ENCODE measurements at regions of chr5 and their contacts with region 1.

Region 1: DNA sequence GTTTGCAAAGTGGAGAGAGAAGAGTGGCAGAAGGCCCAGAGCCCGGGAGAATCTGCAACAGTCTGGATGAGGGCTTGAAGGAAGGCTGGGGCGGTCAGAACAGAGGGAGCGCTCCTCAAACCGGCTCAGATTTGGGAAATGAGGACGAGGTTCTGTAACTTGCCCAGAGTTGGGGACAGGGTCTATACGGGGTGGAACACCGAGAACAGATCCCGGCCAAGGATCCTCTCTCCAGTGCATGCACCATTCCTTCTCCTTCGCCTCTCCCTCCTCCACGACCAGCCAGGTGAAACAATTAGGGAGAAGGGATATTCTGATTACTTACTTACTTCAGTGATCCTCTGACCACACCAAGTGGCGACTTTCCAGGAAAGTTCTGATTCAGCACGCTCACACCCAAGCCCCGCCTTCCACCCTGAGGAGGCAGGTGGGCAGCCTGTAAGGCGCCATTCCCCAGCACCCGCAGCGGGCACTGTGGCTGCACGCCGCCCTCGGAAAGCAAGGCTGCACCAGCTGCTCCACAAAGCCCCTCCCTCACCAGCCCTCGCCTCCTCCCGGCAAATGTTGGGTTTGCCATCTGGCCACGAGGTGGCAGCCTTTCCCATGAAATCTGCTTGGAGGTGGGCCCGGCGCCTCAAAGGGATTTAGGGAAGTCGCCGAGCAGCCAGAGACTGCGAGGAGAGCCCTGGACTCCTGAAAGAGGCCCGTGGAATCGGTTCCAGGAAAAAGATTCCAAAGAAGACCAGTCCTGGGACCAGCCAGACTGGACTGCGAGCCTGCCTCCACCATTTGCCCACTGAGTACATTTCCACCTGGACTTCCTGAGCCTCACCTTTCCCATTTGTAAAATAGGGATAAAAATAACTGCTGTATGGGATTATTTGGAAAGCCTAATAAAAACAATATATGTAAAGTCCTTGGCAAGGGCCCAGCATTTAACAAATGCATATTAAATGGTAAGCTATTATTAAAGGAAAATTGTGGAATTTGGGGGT is 22.2 kb upstream of the WWC1 start:
- DNase-seq: peak; percentile 97
- H3K4me3 Mint-ChIP-seq: peak overlapping the region; percentile 12
- H3K27ac Mint-ChIP-seq: peak overlapping the region; percentile 5
- H3K4me1 Mint-ChIP-seq: peaks cover 43% of the 10 kb centered on the region
- H3K27me3 Mint-ChIP-seq: no peaks in the 10 kb centered on the region
- CTCF ChIP-seq: peak; percentile 94

Region 2: DNA sequence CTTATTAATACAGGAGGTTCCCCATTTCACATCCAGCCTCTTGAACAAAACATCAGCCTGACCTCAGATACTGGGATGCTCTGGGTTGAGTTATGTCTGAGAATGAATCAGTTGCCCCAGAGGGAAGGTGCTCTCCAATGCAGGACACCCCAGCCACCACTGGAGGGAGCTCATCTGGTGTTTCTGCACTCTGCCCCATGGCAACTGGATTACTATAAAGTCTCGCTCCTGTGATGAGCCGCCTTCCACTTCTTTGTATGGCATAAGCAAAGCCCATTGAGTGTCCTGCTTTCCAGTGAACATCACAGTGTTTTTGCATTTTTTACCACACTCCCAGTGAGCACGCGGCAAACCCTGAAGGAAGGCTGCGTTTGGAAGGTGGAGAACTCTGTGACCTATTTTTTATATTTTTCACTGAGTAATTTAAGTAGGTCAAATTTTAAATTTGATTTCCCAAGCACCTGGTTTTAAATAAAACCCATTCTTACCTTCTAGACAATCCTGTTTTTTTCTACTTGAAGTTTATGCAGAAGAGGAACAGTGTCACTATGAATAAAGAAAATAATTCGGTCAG is 154.7 kb before region 1 on chr5:
- CTCF ChIA-PET with region 1: no interaction called
- intact Hi-C with region 1: no loop called
- DNase-seq: peak; percentile 90
- H3K4me3 Mint-ChIP-seq: no peak overlapping the region
- H3K27ac Mint-ChIP-seq: no peak overlapping the region
- H3K4me1 Mint-ChIP-seq: no peaks in the 10 kb centered on the region
- H3K27me3 Mint-ChIP-seq: peaks cover 59% of the 10 kb centered on the region
- CTCF ChIP-seq: peak; percentile 78

Region 3: GRCh38 chr5:168192120-168192519 is 77.1 kb before region 1 on chr5:
- CTCF ChIA-PET with region 1: no interaction called
- intact Hi-C with region 1: no loop called
- DNase-seq: no peak
- H3K4me3 Mint-ChIP-seq: no peak overlapping the region
- H3K27ac Mint-ChIP-seq: no peak overlapping the region
- H3K4me1 Mint-ChIP-seq: no peaks in the 10 kb centered on the region
- H3K27me3 Mint-ChIP-seq: peaks cover 85% of the 10 kb centered on the region
- CTCF ChIP-seq: no peak

Region 4: DNA sequence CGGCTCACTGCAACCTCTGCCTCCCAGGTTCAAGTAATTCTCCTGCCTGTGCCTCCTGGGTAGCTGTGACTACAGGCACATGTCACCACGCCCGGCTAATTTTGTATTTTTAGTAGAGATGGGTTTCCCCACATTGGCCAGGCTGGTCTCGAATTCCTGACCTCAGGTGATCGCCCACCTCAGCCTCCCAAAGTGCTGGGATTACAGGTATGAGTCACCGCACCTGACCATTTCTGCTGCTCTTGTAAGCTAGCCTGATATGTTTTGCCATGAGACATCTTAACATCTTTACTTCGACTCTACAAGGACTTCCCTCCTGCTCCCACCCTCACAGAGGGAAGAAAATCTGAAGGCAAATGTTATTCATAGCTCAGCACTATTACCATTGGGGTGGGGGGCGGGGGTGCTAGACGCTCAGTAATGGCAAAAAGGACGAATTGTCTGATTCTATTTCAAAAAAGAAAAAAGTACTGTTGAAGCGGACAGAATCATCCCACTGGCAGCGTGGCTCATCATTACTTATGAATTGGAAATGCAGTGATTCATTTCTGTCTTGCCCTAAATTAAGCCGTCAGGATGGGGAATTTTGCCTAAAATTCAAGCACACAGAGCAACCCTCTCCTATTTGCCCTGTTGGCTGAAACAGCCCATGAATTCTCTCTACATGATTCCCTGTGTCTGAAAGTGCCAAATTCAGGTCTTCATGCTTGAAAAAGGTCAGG is 24.2 kb before region 1 on chr5:
- CTCF ChIA-PET with region 1: no interaction called
- intact Hi-C with region 1: no loop called
- DNase-seq: no peak
- H3K4me3 Mint-ChIP-seq: no peak overlapping the region
- H3K27ac Mint-ChIP-seq: no peak overlapping the region
- H3K4me1 Mint-ChIP-seq: no peaks in the 10 kb centered on the region
- H3K27me3 Mint-ChIP-seq: peaks cover 23% of the 10 kb centered on the region
- CTCF ChIP-seq: no peak

Region 5: DNA sequence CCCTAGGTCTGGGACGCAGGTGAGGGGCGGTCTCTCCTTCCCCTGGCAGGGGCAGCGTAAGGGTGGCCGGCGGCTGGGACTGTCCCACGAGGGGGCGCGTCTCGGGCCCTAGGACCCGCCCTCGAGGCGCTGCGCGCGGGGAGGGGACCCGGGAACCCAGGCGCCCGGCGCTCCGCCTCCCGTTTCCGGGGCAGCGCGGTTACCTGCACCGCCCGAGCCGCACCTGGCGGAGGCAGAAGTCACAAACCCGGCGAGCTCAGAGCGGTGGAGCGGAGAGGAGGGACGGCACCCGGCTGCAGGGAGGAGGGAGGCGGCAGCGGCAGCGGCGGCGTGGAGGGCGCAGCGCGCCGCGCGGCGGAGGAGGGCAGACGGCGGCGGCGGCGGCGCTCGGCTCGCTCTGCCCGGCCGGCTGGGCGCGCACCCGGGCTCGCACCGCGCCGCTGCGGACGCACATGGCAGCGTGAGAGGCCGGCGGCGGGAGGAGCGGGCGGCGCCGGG is 22.3 kb after region 1 on chr5 and contains the start of gene WWC1:
- CTCF ChIA-PET with region 1: interaction called, 20 read pairs
- intact Hi-C with region 1: loop called (anchors 2 kb)
- DNase-seq: peak; percentile 99
- H3K4me3 Mint-ChIP-seq: peak within 1 kb of the TSS; percentile 97
- H3K27ac Mint-ChIP-seq: peak within 1 kb of the TSS; percentile 85
- H3K4me1 Mint-ChIP-seq: peaks cover 81% of the 10 kb centered on the region
- H3K27me3 Mint-ChIP-seq: no peaks in the 10 kb centered on the region
- CTCF ChIP-seq: peak; percentile 30
- total RNA-seq, gene WWC1: 190 TPM in 2 replicates

Region 6: DNA sequence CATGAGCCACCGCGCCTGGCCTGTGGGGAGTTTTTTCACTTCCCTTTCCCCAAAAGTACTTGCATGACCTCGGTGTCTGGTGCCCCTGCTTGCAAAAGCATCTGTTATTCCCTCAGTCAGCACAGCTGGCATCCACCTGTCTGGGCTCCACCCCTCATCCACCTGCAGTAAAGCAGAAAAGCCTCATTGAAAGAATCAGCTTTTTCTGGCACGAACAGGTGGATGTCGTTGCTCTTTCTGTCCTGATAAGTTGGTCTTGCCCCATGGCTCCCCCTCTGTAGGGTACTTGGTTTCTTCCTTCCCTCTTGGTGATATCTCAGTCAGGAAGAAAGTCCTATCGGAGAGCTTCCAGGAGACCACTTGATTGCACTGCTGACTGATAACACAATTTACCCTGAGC is 59.6 kb after region 1 on chr5:
- CTCF ChIA-PET with region 1: interaction called, 13 read pairs
- intact Hi-C with region 1: no loop called
- DNase-seq: peak; percentile 78
- H3K4me3 Mint-ChIP-seq: peak overlapping the region; percentile 45
- H3K27ac Mint-ChIP-seq: peak overlapping the region; percentile 28
- H3K4me1 Mint-ChIP-seq: peaks cover 95% of the 10 kb centered on the region
- H3K27me3 Mint-ChIP-seq: no peaks in the 10 kb centered on the region
- CTCF ChIP-seq: no peak

Region 7: DNA sequence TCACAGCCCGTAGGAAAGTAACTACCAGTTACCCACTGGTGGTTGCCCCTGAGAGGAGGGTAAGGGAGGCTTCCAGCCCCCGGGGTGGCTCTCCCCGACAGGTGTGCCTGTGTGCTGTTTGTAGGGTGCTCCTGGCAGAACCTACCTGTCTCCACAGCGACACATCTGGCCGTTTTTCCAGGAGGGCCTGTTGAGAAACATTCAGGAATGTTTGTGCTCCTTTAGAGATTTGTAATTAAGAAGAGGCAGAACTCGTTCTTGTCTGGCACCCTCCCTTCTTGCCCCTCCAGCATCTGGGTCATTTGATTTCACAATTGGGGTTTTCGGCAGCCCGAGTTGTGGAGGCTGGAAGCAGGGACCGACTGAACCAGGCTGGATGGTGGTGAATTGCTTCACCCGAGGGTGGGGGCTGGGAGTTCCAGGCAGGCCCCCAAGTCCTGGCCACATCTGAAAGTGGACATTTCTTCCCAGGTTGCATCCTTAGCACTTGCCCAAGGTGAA is 96.4 kb after region 1 on chr5:
- CTCF ChIA-PET with region 1: interaction called, 15 read pairs
- intact Hi-C with region 1: loop called (anchors 1 kb)
- DNase-seq: peak; percentile 82
- H3K4me3 Mint-ChIP-seq: peak overlapping the region; percentile 49
- H3K27ac Mint-ChIP-seq: peak overlapping the region; percentile 72
- H3K4me1 Mint-ChIP-seq: peaks cover 66% of the 10 kb centered on the region
- H3K27me3 Mint-ChIP-seq: no peaks in the 10 kb centered on the region
- CTCF ChIP-seq: peak; percentile 50

Region 8: DNA sequence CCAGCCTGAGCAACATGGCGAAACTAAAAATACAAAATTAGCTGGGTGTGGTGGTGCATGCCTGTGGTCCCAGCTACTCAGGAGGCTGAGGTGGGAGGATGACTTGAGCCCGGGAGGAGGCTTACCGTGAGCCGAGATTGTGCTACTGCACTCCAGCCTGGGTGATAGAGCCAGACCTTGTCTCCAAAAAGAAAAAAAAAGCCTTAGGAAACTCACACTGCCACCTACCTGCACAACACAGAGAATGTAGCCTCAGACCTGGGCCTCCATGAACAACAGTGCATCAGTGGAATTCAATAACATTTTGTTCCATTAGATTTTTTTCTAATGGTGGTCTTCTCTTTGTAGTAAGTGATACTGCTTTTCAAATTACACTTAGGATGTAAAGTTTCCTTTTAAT is 153.2 kb after region 1 on chr5:
- CTCF ChIA-PET with region 1: interaction called, 8 read pairs
- intact Hi-C with region 1: loop called (anchors 1 kb)
- DNase-seq: no peak
- H3K4me3 Mint-ChIP-seq: no peak overlapping the region
- H3K27ac Mint-ChIP-seq: no peak overlapping the region
- H3K4me1 Mint-ChIP-seq: peaks cover 27% of the 10 kb centered on the region
- H3K27me3 Mint-ChIP-seq: no peaks in the 10 kb centered on the region
- CTCF ChIP-seq: no peak